ENCODE measurements at regions of chr2 and their contacts with region 1.

Region 1: DNA sequence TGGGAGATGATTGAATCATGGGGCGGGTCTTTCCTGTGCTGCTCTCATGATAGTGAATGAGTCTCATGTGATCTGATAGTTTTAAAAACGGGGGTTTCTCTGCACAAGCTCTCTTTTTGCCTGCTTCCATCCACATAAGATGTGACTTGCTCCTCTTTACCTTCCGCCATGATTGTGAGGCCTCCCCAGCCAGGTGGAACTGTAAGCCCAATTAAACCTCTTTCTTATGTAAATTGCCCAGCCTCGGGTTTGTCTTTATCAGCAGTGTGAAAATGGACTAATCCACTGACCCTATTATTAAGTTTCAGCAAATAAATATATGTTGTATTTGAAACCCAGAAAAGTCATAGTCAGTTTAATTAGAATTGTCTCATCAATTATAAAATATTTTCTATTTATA is 22.0 kb downstream of the IRS1 start:
- DNase-seq: no peak
- H3K4me3 ChIP-seq: no peak overlapping the region
- H3K27ac ChIP-seq: no peak overlapping the region
- H3K4me1 ChIP-seq: peaks cover 3 to 11% (median 9%) of the 10 kb centered on the region in 4 experiments
- H3K27me3 ChIP-seq: no peaks in the 10 kb centered on the region

Region 2: DNA sequence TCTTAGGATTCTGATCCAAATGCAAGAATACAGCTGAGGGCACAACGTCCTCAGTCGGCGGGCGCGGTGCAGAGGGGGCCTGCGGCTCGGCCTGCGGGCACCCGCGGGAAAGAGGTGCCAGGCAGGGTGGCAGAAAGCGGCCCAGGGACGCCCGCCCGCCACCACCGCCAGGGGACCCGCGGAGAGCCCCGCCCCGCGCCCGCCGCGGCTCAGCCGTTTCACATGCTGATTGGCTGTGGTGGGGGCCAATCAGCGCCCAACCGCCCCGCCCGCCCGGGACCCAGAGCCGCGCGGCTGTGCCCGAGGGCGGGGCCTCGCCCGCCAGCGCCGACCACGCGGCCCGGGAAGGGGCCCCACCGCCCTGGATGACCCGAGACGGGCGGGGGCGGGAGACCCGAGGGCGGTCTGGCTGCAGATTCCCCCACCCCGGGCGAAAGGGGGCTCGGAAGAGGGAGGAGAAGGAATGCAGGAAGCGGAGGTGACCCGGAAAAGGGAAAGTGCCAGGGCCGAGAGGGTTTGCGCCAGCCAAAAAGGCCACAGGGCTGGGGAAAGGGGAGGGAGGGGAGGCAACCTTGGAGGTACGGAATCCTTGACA is 14.0 kb after region 1 on chr2:
- CTCF ChIA-PET with region 1: interaction called, 11 read pairs
- POLR2A ChIA-PET with region 1: no interaction called
- DNase-seq: peak; percentile 85 to 94 (median 91)
- H3K4me3 ChIP-seq: peak overlapping the region; percentile 50 to 78 (median 63)
- H3K27ac ChIP-seq: peak overlapping the region in 1 of 2 experiments; percentile 76
- H3K4me1 ChIP-seq: peaks cover 7 to 13% (median 11%) of the 10 kb centered on the region in 4 experiments
- H3K27me3 ChIP-seq: peaks cover 0 to 5% (median 3%) of the 10 kb centered on the region in 5 experiments

Measured in common myeloid progenitor, CD34-positive (primary cell).